Activated B cell treated with CpG ODN at 0.5 μM for 24 hours (primary cell): ENCODE measurements at regions of chr15 and their contacts with region 1.

Region 1: DNA sequence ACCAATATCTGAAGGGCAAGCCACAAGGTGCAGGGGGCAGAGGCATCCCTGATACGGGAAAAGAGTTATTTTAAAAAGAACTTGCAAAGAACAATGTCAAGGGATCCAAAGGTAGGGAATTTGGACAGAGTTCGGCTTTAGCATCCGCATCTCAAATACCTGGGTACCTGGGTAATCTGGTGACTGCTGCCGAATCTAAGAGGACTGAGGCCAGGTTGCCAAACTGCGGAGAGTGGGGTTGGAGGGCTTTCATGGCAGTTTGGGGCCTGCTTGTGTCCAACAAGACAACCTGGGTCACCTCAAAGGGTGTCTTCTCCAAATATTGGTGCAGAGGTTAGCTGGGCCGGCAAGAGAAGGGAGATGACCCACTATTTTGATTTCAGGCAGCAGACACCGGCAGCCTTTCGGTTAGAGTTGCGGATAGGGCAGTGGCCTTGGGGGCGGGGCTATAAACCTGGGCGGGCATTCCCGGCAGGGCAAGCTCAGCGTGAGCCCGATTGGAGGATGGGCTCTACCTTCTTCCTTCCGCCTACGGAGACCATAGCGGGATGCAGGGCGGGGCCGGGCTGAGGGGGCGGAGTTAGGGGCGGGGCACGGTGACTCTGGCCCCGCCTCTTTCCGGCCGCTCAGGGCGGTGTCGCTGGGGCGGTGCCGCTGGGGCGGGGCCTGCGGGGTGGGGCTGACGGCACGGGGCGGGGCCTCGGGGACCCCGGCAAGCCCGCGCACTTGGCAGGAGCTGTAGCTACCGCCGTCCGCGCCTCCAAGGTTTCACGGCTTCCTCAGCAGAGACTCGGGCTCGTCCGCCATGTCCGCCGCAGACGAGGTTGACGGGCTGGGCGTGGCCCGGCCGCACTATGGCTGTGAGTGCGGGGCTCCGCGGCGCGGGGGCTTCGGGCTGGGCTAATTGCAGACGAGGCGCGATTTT is at the start of gene IQGAP1:
- DNase-seq: peak; percentile 88
- ATAC-seq: peak; percentile 85
- H3K4me3 Mint-ChIP-seq: peak within 1 kb of the TSS; percentile 93
- H3K27ac Mint-ChIP-seq: peak within 1 kb of the TSS; percentile 95
- H3K4me1 Mint-ChIP-seq: peaks cover 47% of the 10 kb centered on the region
- H3K27me3 Mint-ChIP-seq: no peaks in the 10 kb centered on the region
- CTCF ChIP-seq: no peak
- total RNA-seq, gene IQGAP1: 187 and 227 TPM in 2 replicates

Region 2: DNA sequence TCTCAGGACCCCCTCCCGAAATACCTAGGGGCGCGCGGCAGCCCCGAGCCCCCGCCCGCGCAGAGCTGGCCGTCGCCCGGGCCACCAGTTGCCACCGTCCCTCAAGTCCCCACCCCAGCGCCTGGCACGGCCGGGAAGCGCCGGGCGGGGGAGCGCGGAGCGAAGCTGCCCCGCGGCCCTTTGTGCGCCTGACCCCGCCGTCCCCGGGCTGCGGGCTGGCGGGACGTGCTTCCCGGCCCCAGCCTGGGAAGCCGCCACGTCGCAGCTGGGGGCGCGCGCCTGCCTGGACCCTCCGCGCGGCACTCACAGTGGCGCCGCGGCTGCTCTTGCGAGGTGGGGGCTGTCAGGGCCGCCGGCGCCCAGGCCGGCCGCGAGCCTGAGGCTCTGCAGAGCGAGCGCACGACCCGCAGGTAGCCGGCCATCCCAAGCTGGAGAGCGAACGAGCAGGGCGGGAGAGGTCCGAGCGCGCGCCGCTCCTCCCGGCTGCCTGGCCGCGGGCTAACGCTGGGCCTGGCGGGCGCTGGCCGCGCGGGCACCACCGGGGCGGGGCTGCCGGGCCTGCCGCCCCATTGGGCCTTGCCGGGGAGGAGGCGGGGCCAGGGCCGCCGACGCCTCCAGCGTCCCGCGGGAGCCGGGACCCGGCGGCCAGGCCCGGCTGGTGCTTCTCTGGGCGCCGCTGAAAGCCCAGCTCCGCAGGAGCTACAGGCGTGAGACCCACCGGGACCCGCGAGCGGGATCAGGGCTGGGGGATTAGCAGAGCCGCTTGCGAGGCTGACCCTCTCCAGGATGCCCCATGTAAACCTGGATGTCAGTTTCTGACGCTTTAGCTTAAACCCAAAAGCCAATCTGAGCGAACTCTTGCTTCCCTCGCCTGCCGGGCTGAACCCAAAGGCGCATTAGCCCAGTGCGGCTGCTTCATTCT is 285.6 kb before region 1 on chr15 and contains the start of gene IDH2:
- CTCF ChIA-PET with region 1: no interaction called
- POLR2A ChIA-PET with region 1: no interaction called
- intact Hi-C with region 1: loop called (anchors 5 kb)
- DNase-seq: peak; percentile 78
- ATAC-seq: peak; percentile 88
- H3K4me3 Mint-ChIP-seq: peak within 1 kb of the TSS; percentile 89
- H3K27ac Mint-ChIP-seq: peak within 1 kb of the TSS; percentile 83
- H3K4me1 Mint-ChIP-seq: peaks cover 50% of the 10 kb centered on the region
- H3K27me3 Mint-ChIP-seq: peaks cover 9% of the 10 kb centered on the region
- CTCF ChIP-seq: no peak
- total RNA-seq, gene IDH2: 49.1 and 51.2 TPM in 2 replicates

Region 3: GRCh38 chr15:90352109-90352893 is 35.5 kb before region 1 on chr15 and contains the start of gene ZNF774:
- CTCF ChIA-PET with region 1: no interaction called
- POLR2A ChIA-PET with region 1: interaction called, 15 read pairs
- intact Hi-C with region 1: loop called (anchors 1 kb)
- DNase-seq: peak; percentile 78
- ATAC-seq: peak; percentile 98
- H3K4me3 Mint-ChIP-seq: peak within 1 kb of the TSS; percentile 87
- H3K27ac Mint-ChIP-seq: peak within 1 kb of the TSS; percentile 82
- H3K4me1 Mint-ChIP-seq: peaks cover 11% of the 10 kb centered on the region
- H3K27me3 Mint-ChIP-seq: no peaks in the 10 kb centered on the region
- CTCF ChIP-seq: no peak
- total RNA-seq, gene ZNF774: 1.3 and 2.9 TPM in 2 replicates

Region 4: DNA sequence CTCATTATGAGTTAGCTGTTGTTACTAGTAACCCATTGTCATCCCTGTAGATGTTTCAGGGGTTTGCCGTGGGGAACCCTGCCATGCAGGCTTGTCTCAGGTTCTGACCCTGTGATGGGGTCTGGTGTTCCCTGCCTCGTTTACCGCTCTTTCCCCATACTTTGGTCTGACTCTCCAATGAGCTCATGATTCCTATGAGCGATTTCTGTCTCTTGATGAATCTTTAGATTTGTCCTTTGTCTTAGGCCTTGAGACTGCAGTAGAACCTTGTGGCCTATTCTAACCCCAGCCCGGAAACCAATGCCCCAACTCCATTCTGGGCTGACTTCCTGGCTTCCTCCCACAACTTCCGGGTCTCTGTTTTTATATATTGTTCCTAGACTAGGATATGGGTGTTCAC is 11.0 kb before region 1 on chr15:
- CTCF ChIA-PET with region 1: no interaction called
- POLR2A ChIA-PET with region 1: interaction called, 20 read pairs
- intact Hi-C with region 1: no loop called
- DNase-seq: no peak
- ATAC-seq: peak; percentile 34
- H3K4me3 Mint-ChIP-seq: peak overlapping the region; percentile 25
- H3K27ac Mint-ChIP-seq: peak overlapping the region; percentile 86
- H3K4me1 Mint-ChIP-seq: peaks cover 22% of the 10 kb centered on the region
- H3K27me3 Mint-ChIP-seq: no peaks in the 10 kb centered on the region
- CTCF ChIP-seq: no peak

Region 5: DNA sequence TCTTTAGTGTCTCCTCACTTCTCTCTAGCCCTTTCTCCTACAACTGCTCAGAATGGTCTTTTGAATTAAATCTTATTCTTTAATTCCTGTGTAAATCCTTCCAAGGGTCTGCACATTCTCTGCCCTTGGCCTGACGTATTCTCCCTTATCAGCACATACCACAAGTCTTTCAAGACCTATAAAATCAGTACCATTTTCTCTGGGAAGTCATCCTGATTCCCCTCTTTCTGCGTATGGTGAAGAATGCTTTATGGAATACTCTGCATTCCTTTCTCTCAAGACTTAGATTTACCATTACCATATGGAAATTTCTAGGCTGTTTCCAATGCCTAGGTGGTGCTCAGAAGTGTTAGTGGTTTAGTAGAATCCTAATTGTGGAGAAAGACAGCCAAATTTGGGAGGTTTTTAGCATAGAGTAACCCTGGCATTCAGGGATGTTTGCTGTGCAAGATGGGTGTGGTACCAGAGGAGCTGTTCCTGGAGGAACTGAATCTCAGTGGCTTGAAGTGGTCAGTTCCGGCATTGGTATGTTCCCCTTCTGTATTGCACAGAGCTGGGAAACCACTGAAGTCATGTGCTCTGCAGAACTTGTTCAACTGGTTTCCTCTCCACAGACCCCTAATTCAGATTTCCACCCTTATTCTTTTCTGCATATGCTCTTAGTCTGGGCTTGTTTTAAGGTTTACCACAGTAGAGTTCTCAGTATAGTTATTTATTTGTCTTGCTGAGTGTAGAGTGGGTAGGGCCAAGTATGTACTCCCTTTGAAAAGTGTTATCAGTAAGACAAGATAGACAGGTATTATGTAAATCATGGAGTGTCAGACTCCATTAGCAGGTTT is 24.8 kb after region 1 on chr15:
- CTCF ChIA-PET with region 1: no interaction called
- POLR2A ChIA-PET with region 1: interaction called, 15 read pairs
- intact Hi-C with region 1: no loop called
- DNase-seq: no peak
- ATAC-seq: peak; percentile 91
- H3K4me3 Mint-ChIP-seq: peak overlapping the region; percentile 46
- H3K27ac Mint-ChIP-seq: peak overlapping the region; percentile 13
- H3K4me1 Mint-ChIP-seq: peaks cover 71% of the 10 kb centered on the region
- H3K27me3 Mint-ChIP-seq: no peaks in the 10 kb centered on the region
- CTCF ChIP-seq: no peak

Region 6: DNA sequence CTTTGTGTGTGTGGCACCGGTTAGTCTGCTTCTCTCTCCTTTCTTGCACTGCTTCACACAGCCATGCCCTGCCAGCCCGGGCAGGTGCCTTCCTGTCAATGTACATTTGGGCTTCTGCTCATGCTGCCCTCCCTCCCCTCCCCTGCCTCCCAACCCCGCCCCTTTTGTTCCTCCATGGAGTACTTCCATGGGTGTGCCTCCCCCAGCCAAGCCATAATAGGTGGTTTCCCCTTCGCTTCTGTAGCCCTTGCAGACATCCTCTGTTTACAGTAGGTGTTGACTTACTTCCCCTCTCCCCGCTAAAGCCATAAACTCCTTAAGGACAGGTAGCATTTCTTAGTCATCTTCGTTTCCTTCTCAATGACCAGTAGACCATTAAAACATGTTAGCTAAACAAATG is 110.1 kb after region 1 on chr15:
- CTCF ChIA-PET with region 1: no interaction called
- POLR2A ChIA-PET with region 1: no interaction called
- intact Hi-C with region 1: no loop called
- DNase-seq: no peak
- ATAC-seq: no peak
- H3K4me3 Mint-ChIP-seq: no peak overlapping the region
- H3K27ac Mint-ChIP-seq: no peak overlapping the region
- H3K4me1 Mint-ChIP-seq: no peaks in the 10 kb centered on the region
- H3K27me3 Mint-ChIP-seq: no peaks in the 10 kb centered on the region
- CTCF ChIP-seq: no peak

Region 7: DNA sequence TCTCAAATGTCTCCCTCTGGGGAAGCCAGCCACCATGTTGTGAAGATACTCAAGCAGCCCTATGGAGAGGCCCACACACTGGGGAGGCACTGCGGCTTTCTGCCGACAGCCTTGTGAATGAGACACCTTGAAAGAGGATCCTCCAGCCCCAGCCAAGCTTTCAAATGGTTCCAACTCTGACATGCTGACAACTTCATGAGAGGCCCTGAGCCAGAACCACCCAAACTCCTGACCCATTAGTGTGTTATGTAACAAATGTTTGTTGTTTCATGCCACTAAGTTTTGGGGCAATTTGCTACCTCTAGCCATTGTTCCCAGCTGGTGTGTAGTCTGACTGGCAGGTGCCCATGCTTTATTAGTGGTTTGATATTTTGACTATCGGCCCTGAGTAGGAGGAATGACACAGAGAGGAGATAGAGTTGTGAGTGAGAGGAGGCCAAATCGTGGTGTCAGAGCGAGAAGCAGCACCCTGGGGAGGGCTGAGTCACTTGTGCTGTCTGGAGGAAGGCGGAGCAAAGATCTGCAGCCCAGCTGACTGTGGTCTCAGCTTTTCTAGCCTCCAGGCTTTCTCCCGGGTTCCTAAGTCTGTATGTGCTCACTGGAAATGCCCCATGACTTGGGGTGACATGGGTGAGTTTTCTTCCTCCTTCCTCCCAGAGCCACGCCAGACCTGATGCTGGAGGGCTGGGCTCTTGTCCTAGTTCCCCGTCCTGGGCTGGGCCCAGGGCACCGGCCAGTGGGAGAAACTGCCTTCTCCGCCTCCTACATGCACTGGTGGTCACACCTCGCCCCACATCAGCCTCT is 272.6 kb after region 1 on chr15:
- CTCF ChIA-PET with region 1: no interaction called
- POLR2A ChIA-PET with region 1: no interaction called
- intact Hi-C with region 1: loop called (anchors 5 kb)
- DNase-seq: peak; percentile 51
- ATAC-seq: peak; percentile 90
- H3K4me3 Mint-ChIP-seq: peak overlapping the region; percentile 81
- H3K27ac Mint-ChIP-seq: peak overlapping the region; percentile 91
- H3K4me1 Mint-ChIP-seq: peaks cover 76% of the 10 kb centered on the region
- H3K27me3 Mint-ChIP-seq: peaks cover 19% of the 10 kb centered on the region
- CTCF ChIP-seq: no peak